Activated CD4-positive, alpha-beta T cell treated with anti-CD3 and anti-CD28 coated beads, Interleukin-2, amount 10 ng/mL, durations not matched to agents 24 days and 14 days (primary cell): ENCODE measurements at regions of chr17 and their contacts with region 1.

Region 1: DNA sequence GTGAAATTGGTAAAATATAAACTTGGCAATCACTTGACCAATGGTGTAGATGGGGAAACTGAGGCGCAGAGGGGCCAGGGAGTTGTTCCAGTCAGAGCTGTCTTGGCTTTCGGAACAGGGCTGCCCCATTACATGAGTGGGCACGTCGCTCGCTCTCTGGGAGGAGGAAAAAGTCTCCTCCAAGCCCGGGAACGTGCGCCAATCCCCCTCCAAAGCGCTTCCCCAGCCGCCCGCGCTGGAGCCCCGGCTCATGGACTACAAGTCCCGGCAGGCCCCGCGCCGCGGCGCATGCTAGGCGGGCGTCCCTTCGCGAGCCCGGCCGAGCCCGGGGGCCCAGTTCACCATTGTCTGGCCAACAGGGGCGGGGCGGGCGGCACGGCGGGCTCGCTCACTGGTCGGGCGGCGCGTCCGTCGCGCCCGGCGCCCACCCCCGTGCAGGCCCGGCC is 291 bp upstream of the LLGL1 start:
- DNase-seq: peak; percentile 99
- H3K4me3 Mint-ChIP-seq: peak overlapping the region; percentile 72
- H3K27ac Mint-ChIP-seq: peak overlapping the region; percentile 67
- H3K4me1 Mint-ChIP-seq: peaks cover 19% of the 10 kb centered on the region
- H3K27me3 Mint-ChIP-seq: peaks cover 2% of the 10 kb centered on the region

Region 2: DNA sequence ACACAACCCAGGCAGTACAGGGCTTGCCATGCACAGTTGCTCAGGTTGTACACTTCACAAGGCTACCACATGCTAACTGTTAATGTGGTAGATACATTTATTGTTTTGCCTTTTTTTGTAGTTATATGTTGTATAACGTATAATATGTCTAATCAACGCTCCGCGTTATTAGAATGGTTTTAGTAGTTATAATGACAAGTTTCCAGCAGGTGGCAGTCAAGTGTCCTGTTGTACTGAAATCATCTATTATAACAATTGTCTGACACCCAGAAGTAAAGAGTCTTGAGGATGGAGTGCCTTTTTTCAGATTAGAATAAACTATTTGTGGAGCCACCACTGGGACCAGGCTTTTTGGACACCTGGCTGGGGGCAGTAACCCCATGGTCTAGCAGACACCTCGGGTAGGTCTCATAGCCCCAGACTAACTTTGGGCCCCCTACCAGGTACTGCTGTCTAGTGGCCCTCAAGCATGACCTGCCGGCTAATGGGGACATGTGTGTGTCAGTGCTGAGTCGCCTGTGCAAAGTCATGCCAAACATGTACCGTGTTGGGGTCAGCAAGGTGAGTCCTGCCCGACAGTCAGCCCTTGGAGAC is 83.8 kb before region 1 on chr17:
- intact Hi-C with region 1: loop called (anchors 5 kb)
- DNase-seq: peak; percentile 84
- H3K4me3 Mint-ChIP-seq: no peak overlapping the region
- H3K27ac Mint-ChIP-seq: no peak overlapping the region
- H3K4me1 Mint-ChIP-seq: no peaks in the 10 kb centered on the region
- H3K27me3 Mint-ChIP-seq: no peaks in the 10 kb centered on the region

Region 3: DNA sequence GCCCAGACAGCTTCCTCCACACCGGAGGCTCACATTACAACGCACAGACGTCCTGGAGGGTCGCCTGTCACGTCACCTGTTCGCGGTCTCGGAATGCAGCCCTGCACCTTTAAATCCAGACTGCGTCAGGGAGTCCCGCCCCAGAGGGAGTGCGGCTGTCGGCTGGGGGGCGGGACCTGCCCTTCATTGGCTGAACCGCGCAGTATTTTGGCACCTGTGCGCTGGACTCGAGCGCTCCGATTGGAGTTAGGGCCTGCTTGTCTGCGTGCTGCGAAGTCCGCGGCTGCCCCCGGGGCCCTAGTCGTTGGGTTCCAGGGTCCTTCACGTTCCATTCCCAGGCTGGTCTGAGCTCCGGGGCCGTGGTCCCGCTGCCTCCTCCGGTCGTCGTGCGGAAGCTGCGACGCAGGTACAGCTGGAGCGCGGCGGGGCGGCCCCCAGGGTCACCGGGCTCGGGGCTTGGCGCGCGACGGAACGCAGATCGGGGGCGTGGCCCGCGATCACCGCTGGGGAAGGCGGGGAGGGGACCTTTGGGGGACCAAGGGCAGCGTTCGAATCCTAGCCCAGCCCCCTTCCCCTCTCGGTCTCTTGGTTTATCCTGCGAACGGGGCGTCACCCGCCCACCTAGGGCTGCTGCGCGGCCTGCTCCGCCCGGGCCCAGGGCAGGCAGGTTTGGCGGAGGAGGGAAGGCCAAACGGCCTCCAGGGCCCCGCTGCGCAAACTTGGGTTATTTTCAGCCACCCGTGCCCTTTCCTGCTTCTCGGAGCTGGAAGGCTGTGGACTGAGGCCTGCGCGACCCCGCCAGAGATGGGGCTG is 35.4 kb after region 1 on chr17 and contains the start of gene MIEF2:
- intact Hi-C with region 1: loop called (anchors 1 kb)
- DNase-seq: peak; percentile 98
- H3K4me3 Mint-ChIP-seq: peak within 1 kb of the TSS; percentile 85
- H3K27ac Mint-ChIP-seq: peak within 1 kb of the TSS; percentile 86
- H3K4me1 Mint-ChIP-seq: peaks cover 29% of the 10 kb centered on the region
- H3K27me3 Mint-ChIP-seq: no peaks in the 10 kb centered on the region
- total RNA-seq, gene MIEF2: 4.3 and 6.0 TPM in 2 replicates